Activated CD8-positive, alpha-beta T cell treated with anti-CD3 and anti-CD28 coated beads for 36 hours (primary cell): ENCODE measurements at regions of chr18 and their contacts with region 1.

Region 1: GRCh38 chr18:35949903-35950627 is 22.4 kb upstream of the RMP24 start:
- DNase-seq: peak; percentile 55
- ATAC-seq: peak; percentile 92
- H3K4me3 Mint-ChIP-seq: peak overlapping the region; percentile 68
- H3K27ac Mint-ChIP-seq: no peak overlapping the region
- H3K4me1 Mint-ChIP-seq: peaks cover 5% of the 10 kb centered on the region
- H3K27me3 Mint-ChIP-seq: peaks cover 17% of the 10 kb centered on the region
- CTCF ChIP-seq: peak; percentile 95

Region 2: DNA sequence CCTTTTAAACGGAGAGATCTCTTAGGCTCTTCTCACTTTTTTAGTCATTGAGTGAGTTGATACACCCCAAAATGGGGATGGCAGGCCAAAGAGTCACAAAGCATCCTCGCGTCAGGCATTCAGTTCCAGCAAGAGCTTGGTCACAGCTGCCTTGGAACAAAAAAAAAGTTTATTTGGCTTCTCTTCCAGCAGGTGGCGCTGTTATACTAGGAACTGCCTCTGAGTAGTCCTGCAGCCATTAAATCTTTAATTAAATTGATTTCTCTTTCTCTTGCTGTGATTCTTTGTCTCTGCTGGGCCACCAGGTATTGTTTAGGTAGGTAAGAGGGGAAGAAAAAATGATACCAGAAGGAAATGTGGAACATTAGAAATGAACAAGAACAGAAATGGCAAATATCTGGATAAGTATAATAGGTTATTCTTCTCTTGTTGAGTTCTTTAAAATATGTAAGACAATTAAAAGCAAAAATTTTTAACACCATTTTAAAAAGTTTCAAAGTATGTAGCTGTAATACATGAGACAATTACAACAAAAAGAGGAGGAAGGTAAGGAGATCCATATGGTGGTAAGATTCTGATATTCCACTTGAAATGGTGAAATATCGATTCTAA is 193.5 kb before region 1 on chr18:
- CTCF ChIA-PET with region 1: interaction called, 56 read pairs
- POLR2A ChIA-PET with region 1: no interaction called
- intact Hi-C with region 1: loop called (anchors 2 kb)
- DNase-seq: peak; percentile 62
- ATAC-seq: peak; percentile 69
- H3K4me3 Mint-ChIP-seq: no peak overlapping the region
- H3K27ac Mint-ChIP-seq: no peak overlapping the region
- H3K4me1 Mint-ChIP-seq: no peaks in the 10 kb centered on the region
- H3K27me3 Mint-ChIP-seq: peaks cover 19% of the 10 kb centered on the region
- CTCF ChIP-seq: peak; percentile 95

Region 3: GRCh38 chr18:35939138-35939537 is 10.9 kb before region 1 on chr18:
- CTCF ChIA-PET with region 1: interaction called, 22 read pairs
- POLR2A ChIA-PET with region 1: no interaction called
- intact Hi-C with region 1: no loop called
- DNase-seq: no peak
- ATAC-seq: no peak
- H3K4me3 Mint-ChIP-seq: no peak overlapping the region
- H3K27ac Mint-ChIP-seq: no peak overlapping the region
- H3K4me1 Mint-ChIP-seq: no peaks in the 10 kb centered on the region
- H3K27me3 Mint-ChIP-seq: no peaks in the 10 kb centered on the region
- CTCF ChIP-seq: no peak